ENCODE measurements at regions of chr9 and their contacts with region 1.

Region 1: GRCh38 chr9:17699615-17700330 is 120.9 kb downstream of the SH3GL2 start:
- DNase-seq: no peak
- ATAC-seq: no peak
- H3K4me3 Mint-ChIP-seq: no peak overlapping the region
- H3K27ac Mint-ChIP-seq: no peak overlapping the region
- H3K4me1 Mint-ChIP-seq: no peaks in the 10 kb centered on the region
- H3K27me3 Mint-ChIP-seq: no peaks in the 10 kb centered on the region
- CTCF ChIP-seq: no peak

Region 2: GRCh38 chr9:17761984-17762676 is 62.4 kb after region 1 on chr9:
- CTCF ChIA-PET with region 1: no interaction called
- POLR2A ChIA-PET with region 1: no interaction called
- intact Hi-C with region 1: loop called (anchors 10 kb)
- DNase-seq: no peak
- ATAC-seq: no peak
- H3K4me3 Mint-ChIP-seq: no peak overlapping the region
- H3K27ac Mint-ChIP-seq: no peak overlapping the region
- H3K4me1 Mint-ChIP-seq: no peaks in the 10 kb centered on the region
- H3K27me3 Mint-ChIP-seq: no peaks in the 10 kb centered on the region
- CTCF ChIP-seq: no peak

Measured in activated B cell treated with CpG ODN at 0.5 μM for 24 hours (primary cell).